GM18951 (cell line): ENCODE measurements at regions of chr11 and their contacts with region 1.

Region 1: GRCh38 chr11:18731949-18732821 is 6.2 kb upstream of the IGSF22 start:
- POLR2A ChIP-seq: no peak

Region 2: GRCh38 chr11:18243783-18244362 is 488.3 kb before region 1 on chr11:
- in situ Hi-C with region 1: no loop called
- POLR2A ChIP-seq: no peak

Region 3: GRCh38 chr11:18526521-18527296 is 205.5 kb before region 1 on chr11 and contains the start of gene TSG101:
- in situ Hi-C with region 1: loop called (anchors 25 kb)
- POLR2A ChIP-seq: peak; percentile 94